ENCODE measurements at regions of chr4 and their contacts with region 1.

Region 1: GRCh38 chr4:182486881-182487280 is 243.7 kb downstream of the TENM3 start:
- DNase-seq: no peak
- H3K4me3 ChIP-seq: no peak overlapping the region
- H3K27ac ChIP-seq: no peak overlapping the region
- H3K4me1 ChIP-seq: no peaks in the 10 kb centered on the region
- H3K27me3 ChIP-seq: no peaks in the 10 kb centered on the region
- CTCF ChIP-seq: no peak
- POLR2A ChIP-seq: no peak

Region 2: DNA sequence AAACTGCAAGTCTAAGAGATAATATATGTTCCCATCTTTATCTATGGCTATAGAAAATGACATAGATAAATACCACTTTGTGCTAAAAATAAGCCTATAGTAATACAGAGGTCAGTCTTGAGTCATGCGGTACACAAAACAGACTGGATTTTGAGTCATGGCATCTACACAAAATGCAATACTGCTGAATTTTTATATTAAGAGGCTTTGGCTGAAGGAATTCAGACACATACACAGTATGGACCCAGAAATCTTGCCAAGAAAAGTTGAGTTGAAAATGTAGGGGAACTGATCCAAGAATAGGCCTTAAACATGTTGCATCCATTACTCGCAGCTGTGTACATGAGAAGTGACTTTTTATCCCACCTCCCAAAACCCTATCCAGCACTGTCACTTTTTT is 59.3 kb before region 1 on chr4:
- intact Hi-C with region 1: no loop called
- DNase-seq: no peak
- H3K4me3 ChIP-seq: no peak overlapping the region
- H3K27ac ChIP-seq: no peak overlapping the region
- H3K4me1 ChIP-seq: no peaks in the 10 kb centered on the region
- H3K27me3 ChIP-seq: no peaks in the 10 kb centered on the region
- CTCF ChIP-seq: no peak
- POLR2A ChIP-seq: no peak

Region 3: GRCh38 chr4:182578402-182578801 is 91.5 kb after region 1 on chr4:
- intact Hi-C with region 1: no loop called
- DNase-seq: no peak
- H3K4me3 ChIP-seq: no peak overlapping the region
- H3K27ac ChIP-seq: no peak overlapping the region
- H3K4me1 ChIP-seq: no peaks in the 10 kb centered on the region
- H3K27me3 ChIP-seq: no peaks in the 10 kb centered on the region
- CTCF ChIP-seq: no peak
- POLR2A ChIP-seq: no peak

Region 4: DNA sequence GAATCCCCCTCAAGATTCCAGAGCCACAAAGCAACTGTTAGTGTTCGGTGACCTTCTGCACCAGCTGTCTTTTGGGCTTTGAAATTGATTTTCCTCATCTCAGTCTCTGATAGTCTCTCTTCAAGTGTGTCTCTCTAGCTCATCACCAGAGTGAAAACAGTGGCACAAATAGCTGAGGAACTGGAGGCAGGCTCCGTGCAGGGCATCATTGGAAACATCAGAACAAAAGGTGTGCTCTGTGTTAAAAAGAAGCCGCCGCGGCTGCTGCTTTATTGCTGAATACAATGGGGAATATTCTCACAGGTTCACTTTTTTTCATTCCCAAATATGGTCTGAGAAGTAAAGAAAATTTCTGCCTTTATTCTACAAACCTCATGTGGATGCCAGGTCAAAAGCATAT is 132.8 kb after region 1 on chr4:
- intact Hi-C with region 1: no loop called
- DNase-seq: no peak
- H3K4me3 ChIP-seq: no peak overlapping the region
- H3K27ac ChIP-seq: no peak overlapping the region
- H3K4me1 ChIP-seq: no peaks in the 10 kb centered on the region
- H3K27me3 ChIP-seq: no peaks in the 10 kb centered on the region
- CTCF ChIP-seq: no peak
- POLR2A ChIP-seq: no peak

Region 5: DNA sequence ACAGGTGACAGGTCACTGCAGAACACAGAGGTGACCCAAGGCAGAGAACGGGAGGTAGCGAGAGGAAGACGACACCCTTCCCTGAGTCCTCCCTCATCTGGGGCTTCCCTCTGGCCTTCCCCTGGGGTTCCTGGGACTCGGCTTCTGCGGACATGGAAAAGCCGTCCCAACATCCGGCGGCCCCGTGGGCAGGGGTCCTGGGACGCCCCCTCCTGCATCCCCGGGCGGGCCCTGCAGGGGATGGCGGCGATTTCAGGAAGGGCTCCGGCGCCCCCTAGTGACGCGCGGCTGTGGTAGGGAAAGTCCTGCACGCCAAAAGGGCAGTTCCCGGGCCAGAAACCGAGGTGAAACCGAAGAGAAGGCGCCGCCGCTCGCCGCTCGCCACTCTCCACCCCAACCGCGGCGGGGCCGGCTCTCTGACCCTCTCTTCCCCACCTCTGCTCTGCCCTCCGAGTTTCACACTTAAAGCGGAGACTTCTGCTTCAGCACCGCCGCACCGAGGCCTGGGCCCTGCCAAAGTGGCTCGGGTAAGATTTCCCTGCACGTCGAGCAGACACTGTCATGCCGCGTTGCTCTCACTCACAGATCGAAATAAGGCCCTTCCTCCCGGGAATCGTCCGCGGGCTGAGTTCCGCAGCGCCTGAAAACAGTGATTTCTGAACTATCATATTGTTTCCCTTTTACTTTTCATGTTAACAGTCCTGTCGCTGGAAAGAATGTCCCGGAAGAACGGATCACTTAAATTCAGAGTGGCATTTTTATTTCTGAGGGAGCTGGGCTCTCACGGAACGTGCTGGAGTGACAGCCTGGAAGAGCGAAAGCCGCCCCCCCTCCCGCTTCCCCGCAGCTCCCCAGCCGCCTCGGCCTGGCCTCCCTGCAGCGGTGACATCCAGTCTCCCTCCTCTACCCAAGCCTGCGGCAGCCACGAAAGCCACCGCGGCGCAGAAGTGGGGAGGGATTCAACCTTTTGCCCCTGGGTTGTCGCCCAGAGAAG is 319.7 kb after region 1 on chr4:
- intact Hi-C with region 1: loop called (anchors 10 kb)
- DNase-seq: peak; percentile 86
- H3K4me3 ChIP-seq: peak overlapping the region; percentile 49 to 67
- H3K27ac ChIP-seq: peak overlapping the region in 1 of 2 donors; percentile 64
- H3K4me1 ChIP-seq: no peaks in the 10 kb centered on the region
- H3K27me3 ChIP-seq: no peaks in the 10 kb centered on the region
- CTCF ChIP-seq: peak; percentile 74 to 76 (median 74)
- POLR2A ChIP-seq: no peak

Measured in testis (tissue), 5 donors.